IMR-90 (cell line): ENCODE measurements at regions of chr2 and their contacts with region 1.

Region 1: DNA sequence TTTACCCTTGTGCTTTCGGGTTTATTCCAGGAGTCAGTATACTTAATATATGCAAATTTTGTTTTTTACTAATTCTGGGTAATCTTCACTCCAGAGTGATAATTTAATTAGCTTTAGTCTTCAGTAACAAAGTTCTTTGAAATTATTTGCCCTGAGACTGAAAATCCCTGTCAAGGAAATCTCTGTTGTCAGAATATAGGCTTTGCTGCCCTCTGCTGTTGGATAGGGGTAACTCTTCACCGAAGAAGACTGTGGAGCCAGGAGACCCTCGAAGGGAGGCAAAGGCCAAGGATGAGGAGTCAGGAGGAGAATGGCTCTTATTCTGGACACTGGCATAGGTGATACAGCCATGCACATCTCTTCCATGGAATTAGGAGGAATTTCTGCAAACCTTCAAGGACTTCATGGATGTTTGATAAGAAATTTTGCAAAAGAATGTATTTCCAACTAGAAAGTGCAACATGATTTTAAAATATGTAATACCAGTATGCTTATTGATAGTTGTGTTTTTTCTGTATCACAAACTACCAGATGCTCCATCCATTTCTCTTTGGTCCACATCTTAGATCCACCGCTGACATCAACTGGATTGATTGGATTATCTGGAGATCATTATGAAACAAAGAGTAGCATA is 182.3 kb downstream of the RDH14 start:
- DNase-seq: peak; percentile 49
- ATAC-seq: peak; percentile 79
- H3K4me3 ChIP-seq: no peak overlapping the region
- H3K27ac ChIP-seq: no peak overlapping the region
- H3K4me1 ChIP-seq: no peaks in the 10 kb centered on the region
- H3K27me3 ChIP-seq: no peaks in the 10 kb centered on the region; the same call in 1 of the 2 replicates
- CTCF ChIP-seq: peak; percentile 84
- POLR2A ChIP-seq: no peak
- RAD21 ChIP-seq: peak; percentile 90

Region 2: DNA sequence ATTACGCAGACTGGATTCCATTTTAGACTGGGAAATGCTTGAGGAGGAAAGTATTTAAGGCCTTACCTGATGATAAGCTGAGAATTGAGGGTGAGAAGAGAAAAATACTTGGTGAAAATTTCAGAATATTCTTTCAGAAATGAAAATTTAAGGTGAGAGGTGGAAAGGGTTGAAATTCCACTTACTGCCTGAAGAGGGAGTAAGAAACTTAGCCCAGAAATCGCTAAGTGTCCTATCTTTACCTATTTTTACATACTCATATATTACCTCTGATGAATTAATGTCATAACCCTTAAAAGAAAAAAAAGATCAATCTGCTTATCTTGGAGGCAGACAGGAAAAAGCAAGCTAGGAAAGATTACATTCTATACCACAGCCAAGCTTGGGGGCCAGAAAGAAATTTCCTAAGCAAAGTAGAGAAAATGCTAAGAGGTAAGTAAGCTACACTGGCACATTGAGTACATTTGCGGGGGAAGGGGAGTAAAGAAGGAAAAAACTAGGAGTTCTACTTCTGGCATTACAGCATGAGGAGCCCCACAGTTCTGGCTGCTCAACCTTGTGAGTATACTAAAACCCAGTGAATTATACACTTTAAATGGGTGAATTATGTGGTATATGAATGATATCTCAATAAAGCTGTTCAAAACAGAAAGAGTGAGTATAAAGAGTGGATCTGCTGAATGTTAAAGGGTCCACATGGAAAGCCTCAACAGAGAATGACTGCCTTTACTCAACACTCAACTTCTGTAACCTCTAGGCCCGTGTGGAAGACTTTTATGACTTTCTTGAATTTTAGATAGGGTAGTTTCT is 658.4 kb before region 1 on chr2:
- CTCF ChIA-PET with region 1: no interaction called
- POLR2A ChIA-PET with region 1: no interaction called
- dilution Hi-C with region 1: no loop called
- in situ Hi-C with region 1: no loop called
- intact Hi-C with region 1: loop called (anchors 1 kb)
- DNase-seq: peak; percentile 27
- ATAC-seq: peak; percentile 77
- H3K4me3 ChIP-seq: no peak overlapping the region
- H3K27ac ChIP-seq: no peak overlapping the region
- H3K4me1 ChIP-seq: no peaks in the 10 kb centered on the region
- H3K27me3 ChIP-seq: no peaks in the 10 kb centered on the region
- CTCF ChIP-seq: peak; percentile 74
- POLR2A ChIP-seq: no peak
- RAD21 ChIP-seq: peak; percentile 67

Region 3: GRCh38 chr2:17736989-17737388 is 641.1 kb before region 1 on chr2:
- CTCF ChIA-PET with region 1: no interaction called
- POLR2A ChIA-PET with region 1: no interaction called
- dilution Hi-C with region 1: no loop called
- in situ Hi-C with region 1: no loop called
- intact Hi-C with region 1: no loop called
- DNase-seq: peak; percentile 82
- ATAC-seq: peak; percentile 62
- H3K4me3 ChIP-seq: no peak overlapping the region
- H3K27ac ChIP-seq: peak overlapping the region; percentile 37; the same call in 1 of the 2 replicates
- H3K4me1 ChIP-seq: peaks cover 9% of the 10 kb centered on the region
- H3K27me3 ChIP-seq: no peaks in the 10 kb centered on the region
- CTCF ChIP-seq: no peak
- POLR2A ChIP-seq: no peak
- RAD21 ChIP-seq: no peak

Region 4: GRCh38 chr2:17857021-17857420 is 521.1 kb before region 1 on chr2:
- CTCF ChIA-PET with region 1: no interaction called
- POLR2A ChIA-PET with region 1: no interaction called
- dilution Hi-C with region 1: no loop called
- in situ Hi-C with region 1: loop called (anchors 5 kb)
- intact Hi-C with region 1: no loop called
- DNase-seq: peak; percentile 18
- ATAC-seq: peak; percentile 37; the same call in 1 of the 2 replicates
- H3K4me3 ChIP-seq: no peak overlapping the region
- H3K27ac ChIP-seq: no peak overlapping the region
- H3K4me1 ChIP-seq: no peaks in the 10 kb centered on the region
- H3K27me3 ChIP-seq: peaks cover 8% of the 10 kb centered on the region
- CTCF ChIP-seq: no peak
- POLR2A ChIP-seq: no peak
- RAD21 ChIP-seq: no peak

Region 5: DNA sequence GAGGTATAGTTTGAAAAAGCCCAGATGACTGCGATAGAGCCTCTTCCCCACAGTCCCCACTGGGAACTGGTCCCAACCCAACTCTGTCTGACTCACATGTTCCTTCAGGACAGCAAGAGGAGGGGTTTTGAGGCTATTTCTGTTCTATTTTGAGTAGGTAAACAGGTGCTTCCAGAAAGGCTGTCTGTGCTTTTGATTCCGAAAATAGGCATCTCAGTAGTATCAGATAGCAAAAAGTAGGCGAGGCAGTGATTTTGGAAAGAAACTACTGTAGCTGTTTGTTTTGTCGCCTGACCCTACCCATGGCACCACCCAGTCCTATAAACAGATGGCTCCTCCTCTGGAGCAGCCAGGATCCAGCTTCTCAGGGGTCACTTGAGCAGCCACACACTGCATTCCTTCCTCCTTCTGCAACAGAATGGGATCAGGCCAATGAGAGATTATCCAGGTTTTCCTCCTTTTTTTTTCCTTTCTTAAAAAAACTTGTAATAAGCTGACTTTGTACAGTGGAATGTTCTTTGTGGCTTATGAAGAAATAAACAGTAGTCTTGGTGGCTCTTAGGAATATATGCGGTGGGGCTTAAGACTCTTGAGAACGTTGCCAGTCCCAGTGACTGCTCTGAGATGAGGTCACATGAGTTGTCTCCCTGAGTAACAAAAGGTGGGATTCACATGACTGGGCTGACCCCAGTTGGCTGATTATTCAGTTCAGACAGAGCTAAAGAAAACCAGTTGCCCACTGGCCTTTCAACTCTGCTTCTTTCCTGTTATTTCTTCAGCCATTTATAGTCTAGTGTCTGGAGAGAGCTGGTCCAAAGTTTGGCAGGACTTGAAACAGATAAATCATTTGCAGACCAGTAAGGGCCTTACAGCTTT is 401.0 kb before region 1 on chr2:
- CTCF ChIA-PET with region 1: no interaction called
- POLR2A ChIA-PET with region 1: no interaction called
- dilution Hi-C with region 1: no loop called
- in situ Hi-C with region 1: no loop called
- intact Hi-C with region 1: loop called (anchors 1 kb)
- DNase-seq: peak; percentile 100
- ATAC-seq: peak; percentile 92
- H3K4me3 ChIP-seq: peak overlapping the region; percentile 1; the same call in 1 of the 2 replicates
- H3K27ac ChIP-seq: peak overlapping the region; percentile 50
- H3K4me1 ChIP-seq: peaks cover 19% of the 10 kb centered on the region
- H3K27me3 ChIP-seq: no peaks in the 10 kb centered on the region
- CTCF ChIP-seq: no peak
- POLR2A ChIP-seq: no peak
- RAD21 ChIP-seq: no peak; the same call in 1 of the 2 replicates

Region 6: DNA sequence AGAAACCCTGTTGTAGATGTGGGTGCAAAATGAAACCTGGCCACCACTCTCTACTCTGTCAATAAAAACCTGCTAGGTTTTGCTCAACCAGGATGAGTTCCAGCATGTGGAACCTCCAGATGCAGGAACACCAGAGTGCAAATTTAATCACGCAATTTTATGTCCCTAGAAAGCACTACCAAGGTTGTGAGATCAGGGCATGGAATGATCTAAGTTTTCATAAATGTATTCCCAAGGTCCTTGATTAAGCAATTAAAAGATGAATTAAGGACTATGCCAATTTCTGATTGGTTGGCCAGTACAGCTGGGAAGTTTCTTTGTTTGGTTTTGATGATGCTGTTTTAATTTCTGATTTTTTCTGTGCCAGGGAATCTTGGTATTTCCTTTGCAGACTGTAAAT is 320.5 kb before region 1 on chr2:
- CTCF ChIA-PET with region 1: no interaction called
- POLR2A ChIA-PET with region 1: no interaction called
- dilution Hi-C with region 1: no loop called
- in situ Hi-C with region 1: no loop called
- intact Hi-C with region 1: no loop called
- DNase-seq: no peak
- ATAC-seq: no peak
- H3K4me3 ChIP-seq: no peak overlapping the region
- H3K27ac ChIP-seq: no peak overlapping the region
- H3K4me1 ChIP-seq: no peaks in the 10 kb centered on the region
- H3K27me3 ChIP-seq: peaks cover 2% of the 10 kb centered on the region; the same call in 1 of the 2 replicates
- CTCF ChIP-seq: no peak
- POLR2A ChIP-seq: no peak
- RAD21 ChIP-seq: no peak

Region 7: GRCh38 chr2:18178736-18179349 is 199.3 kb before region 1 on chr2:
- CTCF ChIA-PET with region 1: interaction called, 5 read pairs
- POLR2A ChIA-PET with region 1: interaction called, 3 read pairs
- dilution Hi-C with region 1: no loop called
- in situ Hi-C with region 1: loop called (anchors 10 kb)
- intact Hi-C with region 1: loop called (anchors 2 kb)
- DNase-seq: peak; percentile 38
- ATAC-seq: peak; percentile 72; the same call in 1 of the 2 replicates
- H3K4me3 ChIP-seq: no peak overlapping the region
- H3K27ac ChIP-seq: no peak overlapping the region
- H3K4me1 ChIP-seq: no peaks in the 10 kb centered on the region
- H3K27me3 ChIP-seq: peaks cover 5% of the 10 kb centered on the region
- CTCF ChIP-seq: peak; percentile 66
- POLR2A ChIP-seq: no peak
- RAD21 ChIP-seq: peak; percentile 64

Region 8: GRCh38 chr2:18219676-18220075 is 158.5 kb before region 1 on chr2:
- CTCF ChIA-PET with region 1: interaction called, 3 read pairs
- POLR2A ChIA-PET with region 1: no interaction called
- dilution Hi-C with region 1: no loop called
- in situ Hi-C with region 1: loop called (anchors 10 kb)
- intact Hi-C with region 1: loop called (anchors 1 kb)
- DNase-seq: peak; percentile 18
- ATAC-seq: peak; percentile 49
- H3K4me3 ChIP-seq: no peak overlapping the region
- H3K27ac ChIP-seq: no peak overlapping the region
- H3K4me1 ChIP-seq: no peaks in the 10 kb centered on the region
- H3K27me3 ChIP-seq: peaks cover 1% of the 10 kb centered on the region; the same call in 1 of the 2 replicates
- CTCF ChIP-seq: peak; percentile 43; the same call in 1 of the 2 replicates
- POLR2A ChIP-seq: no peak
- RAD21 ChIP-seq: peak; percentile 45

Region 9: GRCh38 chr2:18362696-18363349 is 15.3 kb before region 1 on chr2:
- CTCF ChIA-PET with region 1: no interaction called
- POLR2A ChIA-PET with region 1: no interaction called
- dilution Hi-C with region 1: no loop called
- in situ Hi-C with region 1: no loop called
- intact Hi-C with region 1: no loop called
- DNase-seq: peak; percentile 98
- ATAC-seq: peak; percentile 90
- H3K4me3 ChIP-seq: no peak overlapping the region
- H3K27ac ChIP-seq: peak overlapping the region; percentile 30
- H3K4me1 ChIP-seq: peaks cover 18% of the 10 kb centered on the region
- H3K27me3 ChIP-seq: no peaks in the 10 kb centered on the region
- CTCF ChIP-seq: no peak
- POLR2A ChIP-seq: no peak
- RAD21 ChIP-seq: no peak